ENCODE measurements at regions of chr5 and their contacts with region 1.

Region 1: GRCh38 chr5:112160652-112161391 is 258.3 kb downstream of the EPB41L4A start:
- DNase-seq: peak; percentile 86 to 94 (median 91)
- H3K4me3 ChIP-seq: peak overlapping the region; percentile 78 to 89
- H3K4me3 Mint-ChIP-seq: peak overlapping the region; percentile 92 to 97 (median 96)
- H3K27ac ChIP-seq: peak overlapping the region; percentile 71
- H3K27ac Mint-ChIP-seq: peak overlapping the region; percentile 69 to 93 (median 91)
- H3K4me1 ChIP-seq: peaks cover 23% of the 10 kb centered on the region
- H3K4me1 Mint-ChIP-seq: peaks cover 14 to 38% (median 26%) of the 10 kb centered on the region in 4 donors
- H3K27me3 ChIP-seq: no peaks in the 10 kb centered on the region
- H3K27me3 Mint-ChIP-seq: no peaks in the 10 kb centered on the region

Region 2: DNA sequence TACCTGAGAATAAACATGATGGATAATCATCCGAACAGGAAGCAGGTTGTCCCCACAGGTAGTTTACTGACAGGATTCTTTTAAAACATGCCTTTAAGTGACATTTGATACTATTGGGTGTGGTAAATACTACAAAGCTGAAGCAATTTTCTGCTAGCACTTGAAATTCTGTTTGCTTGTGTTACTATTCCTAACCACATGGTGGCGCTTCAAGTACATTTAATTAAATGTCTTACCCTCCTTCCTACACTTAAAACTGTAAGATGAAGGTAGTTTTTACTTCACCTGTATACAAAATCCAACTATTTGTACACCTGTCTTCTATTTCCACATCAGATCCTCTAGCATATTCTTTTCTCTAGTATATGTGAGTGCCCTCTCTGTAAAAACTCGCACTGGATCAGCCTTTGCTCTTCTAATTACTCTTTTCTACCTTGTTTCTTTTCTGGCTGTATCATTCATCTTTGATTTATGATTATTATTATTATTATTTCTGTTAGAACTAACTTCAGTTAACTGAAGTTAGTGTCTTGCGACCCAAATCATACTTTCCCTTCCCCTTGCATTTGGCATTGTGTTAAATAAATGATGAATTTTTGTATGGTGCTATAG is 1403.6 kb before region 1 on chr5:
- CTCF ChIA-PET with region 1: no interaction called
- POLR2A ChIA-PET with region 1: no interaction called
- intact Hi-C with region 1: loop called (anchors 5 kb)
- DNase-seq: peak in 4 of 5 donors; percentile 28 to 43 (median 30)
- H3K4me3 ChIP-seq: no peak overlapping the region
- H3K4me3 Mint-ChIP-seq: no peak overlapping the region
- H3K27ac ChIP-seq: no peak overlapping the region
- H3K27ac Mint-ChIP-seq: peak overlapping the region in 1 of 7 donors; percentile 40
- H3K4me1 ChIP-seq: peaks cover 26% of the 10 kb centered on the region
- H3K4me1 Mint-ChIP-seq: peaks cover 20 to 31% (median 22%) of the 10 kb centered on the region in 4 donors
- H3K27me3 ChIP-seq: no peaks in the 10 kb centered on the region
- H3K27me3 Mint-ChIP-seq: no peaks in the 10 kb centered on the region

Region 3: GRCh38 chr5:111092062-111092853 is 1068.6 kb before region 1 on chr5 and contains the start of gene WDR36:
- CTCF ChIA-PET with region 1: interaction called, 4 read pairs
- POLR2A ChIA-PET with region 1: interaction called, 5 read pairs
- intact Hi-C with region 1: loop called (anchors 1 kb)
- DNase-seq: peak; percentile 85 to 91 (median 87)
- H3K4me3 ChIP-seq: peak within 1 kb of the TSS; percentile 82 to 90
- H3K4me3 Mint-ChIP-seq: peak within 1 kb of the TSS; percentile 90 to 98 (median 97)
- H3K27ac ChIP-seq: peak within 1 kb of the TSS; percentile 73
- H3K27ac Mint-ChIP-seq: peak within 1 kb of the TSS; percentile 83 to 98 (median 96)
- H3K4me1 ChIP-seq: peaks cover 25% of the 10 kb centered on the region
- H3K4me1 Mint-ChIP-seq: peaks cover 15 to 34% (median 27%) of the 10 kb centered on the region in 4 donors
- H3K27me3 ChIP-seq: no peaks in the 10 kb centered on the region
- H3K27me3 Mint-ChIP-seq: peaks cover 1 to 7% of the 10 kb centered on the region in 2 donors
- total RNA-seq, gene WDR36: 26.3 to 27.6 TPM

Region 4: DNA sequence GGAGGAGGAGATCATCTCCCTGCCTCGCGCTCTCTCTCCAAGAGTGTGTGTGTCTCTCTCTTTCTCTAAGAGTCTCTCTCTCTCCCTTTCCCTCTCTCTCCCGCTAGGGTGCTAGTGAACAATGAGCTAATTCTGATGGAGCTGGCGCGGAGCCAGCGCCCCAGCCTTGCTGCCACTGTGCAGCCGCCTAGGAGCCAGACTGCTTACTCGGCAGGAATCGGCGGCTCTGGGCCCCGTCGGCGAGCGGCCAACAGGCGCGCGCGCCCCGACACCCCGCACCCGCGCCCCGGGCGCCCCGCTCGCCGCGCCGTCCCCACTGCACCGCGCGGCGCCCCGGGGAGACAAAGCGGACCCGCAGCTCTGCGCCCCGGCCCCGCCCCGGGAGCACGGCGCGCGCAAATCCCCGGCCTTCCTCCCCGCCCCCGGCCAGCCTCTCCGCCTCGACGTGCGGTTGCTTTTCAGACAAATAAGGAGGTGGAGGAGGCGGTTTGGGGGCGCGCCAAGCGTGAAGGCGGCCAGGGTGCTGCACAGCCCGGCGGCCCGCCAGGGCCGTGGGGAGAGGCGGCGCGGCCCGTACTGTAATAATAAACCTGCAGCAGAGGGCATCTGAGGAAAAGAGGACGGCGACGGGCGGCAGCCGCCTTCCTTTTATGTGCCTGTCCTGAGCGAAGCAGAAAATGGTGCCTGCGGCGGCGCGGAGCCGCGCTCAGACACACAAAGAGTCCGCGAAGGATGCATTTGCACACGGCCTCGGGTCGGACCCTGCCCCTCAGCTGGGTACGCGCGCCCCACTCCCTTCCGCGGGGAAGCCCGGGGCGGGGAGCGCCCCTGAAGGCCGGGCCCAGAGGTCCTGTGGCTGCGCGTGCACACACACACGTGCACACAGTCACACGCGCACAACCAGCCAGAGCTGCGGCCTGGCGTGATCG is 403.2 kb before region 1 on chr5:
- CTCF ChIA-PET with region 1: no interaction called
- POLR2A ChIA-PET with region 1: interaction called, 4 read pairs
- intact Hi-C with region 1: loop called (anchors 5 kb)
- DNase-seq: peak; percentile 68 to 77 (median 70)
- H3K4me3 ChIP-seq: peak overlapping the region in 1 of 2 donors; percentile 59
- H3K4me3 Mint-ChIP-seq: peak overlapping the region; percentile 82 to 93 (median 86)
- H3K27ac ChIP-seq: no peak overlapping the region
- H3K27ac Mint-ChIP-seq: peak overlapping the region in 4 of 7 donors; percentile 37 to 89 (median 64)
- H3K4me1 ChIP-seq: no peaks in the 10 kb centered on the region
- H3K4me1 Mint-ChIP-seq: peaks cover 6 to 12% (median 8%) of the 10 kb centered on the region in 4 donors
- H3K27me3 ChIP-seq: no peaks in the 10 kb centered on the region
- H3K27me3 Mint-ChIP-seq: peaks cover 6 to 9% of the 10 kb centered on the region in 2 donors

Region 5: DNA sequence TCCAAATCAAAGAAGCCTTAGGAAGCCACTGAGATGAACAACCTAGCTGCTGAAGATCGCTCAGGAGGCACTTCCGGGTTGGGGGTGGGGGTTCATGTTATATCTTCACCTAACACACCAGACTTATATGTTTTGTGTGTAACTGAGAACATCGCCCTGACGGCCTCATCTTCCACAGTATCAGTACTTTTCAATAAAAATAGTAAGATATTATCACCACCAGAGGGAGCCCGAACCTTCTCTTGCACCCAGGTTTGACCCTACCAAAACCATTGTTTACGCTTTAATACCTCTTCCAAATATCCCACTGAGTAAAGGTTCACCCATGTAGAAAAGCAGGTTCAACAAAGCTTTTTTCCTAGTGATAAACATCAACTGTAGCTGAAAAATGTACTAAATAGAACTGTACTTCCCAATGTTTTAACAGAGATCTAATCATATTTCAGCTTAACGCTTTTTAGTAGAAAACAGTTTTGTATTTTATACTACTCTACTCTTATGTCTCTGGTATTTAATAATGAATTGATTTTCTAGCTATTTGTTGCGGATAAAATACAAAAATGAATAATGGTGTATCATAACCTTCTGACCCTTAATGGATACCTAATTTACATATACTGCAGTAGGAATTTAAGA is 14.3 kb after region 1 on chr5:
- CTCF ChIA-PET with region 1: interaction called, 36 read pairs
- POLR2A ChIA-PET with region 1: interaction called, 5 read pairs
- intact Hi-C with region 1: no loop called
- DNase-seq: peak in 4 of 5 donors; percentile 27 to 41 (median 40)
- H3K4me3 ChIP-seq: no peak overlapping the region
- H3K4me3 Mint-ChIP-seq: peak overlapping the region in 2 of 8 donors; percentile 6 to 48
- H3K27ac ChIP-seq: no peak overlapping the region
- H3K27ac Mint-ChIP-seq: no peak overlapping the region
- H3K4me1 ChIP-seq: peaks cover 4% of the 10 kb centered on the region
- H3K4me1 Mint-ChIP-seq: peaks cover 0 to 5% (median 2%) of the 10 kb centered on the region in 4 donors
- H3K27me3 ChIP-seq: no peaks in the 10 kb centered on the region
- H3K27me3 Mint-ChIP-seq: peaks cover 8 to 12% of the 10 kb centered on the region in 2 donors

Region 6: GRCh38 chr5:112276983-112277382 is 116.2 kb after region 1 on chr5:
- CTCF ChIA-PET with region 1: no interaction called
- POLR2A ChIA-PET with region 1: no interaction called
- intact Hi-C with region 1: no loop called
- DNase-seq: no peak
- H3K4me3 ChIP-seq: no peak overlapping the region
- H3K4me3 Mint-ChIP-seq: no peak overlapping the region
- H3K27ac ChIP-seq: no peak overlapping the region
- H3K27ac Mint-ChIP-seq: no peak overlapping the region
- H3K4me1 ChIP-seq: no peaks in the 10 kb centered on the region
- H3K4me1 Mint-ChIP-seq: no peaks in the 10 kb centered on the region
- H3K27me3 ChIP-seq: no peaks in the 10 kb centered on the region
- H3K27me3 Mint-ChIP-seq: peaks cover 2 to 3% of the 10 kb centered on the region in 2 donors

Region 7: DNA sequence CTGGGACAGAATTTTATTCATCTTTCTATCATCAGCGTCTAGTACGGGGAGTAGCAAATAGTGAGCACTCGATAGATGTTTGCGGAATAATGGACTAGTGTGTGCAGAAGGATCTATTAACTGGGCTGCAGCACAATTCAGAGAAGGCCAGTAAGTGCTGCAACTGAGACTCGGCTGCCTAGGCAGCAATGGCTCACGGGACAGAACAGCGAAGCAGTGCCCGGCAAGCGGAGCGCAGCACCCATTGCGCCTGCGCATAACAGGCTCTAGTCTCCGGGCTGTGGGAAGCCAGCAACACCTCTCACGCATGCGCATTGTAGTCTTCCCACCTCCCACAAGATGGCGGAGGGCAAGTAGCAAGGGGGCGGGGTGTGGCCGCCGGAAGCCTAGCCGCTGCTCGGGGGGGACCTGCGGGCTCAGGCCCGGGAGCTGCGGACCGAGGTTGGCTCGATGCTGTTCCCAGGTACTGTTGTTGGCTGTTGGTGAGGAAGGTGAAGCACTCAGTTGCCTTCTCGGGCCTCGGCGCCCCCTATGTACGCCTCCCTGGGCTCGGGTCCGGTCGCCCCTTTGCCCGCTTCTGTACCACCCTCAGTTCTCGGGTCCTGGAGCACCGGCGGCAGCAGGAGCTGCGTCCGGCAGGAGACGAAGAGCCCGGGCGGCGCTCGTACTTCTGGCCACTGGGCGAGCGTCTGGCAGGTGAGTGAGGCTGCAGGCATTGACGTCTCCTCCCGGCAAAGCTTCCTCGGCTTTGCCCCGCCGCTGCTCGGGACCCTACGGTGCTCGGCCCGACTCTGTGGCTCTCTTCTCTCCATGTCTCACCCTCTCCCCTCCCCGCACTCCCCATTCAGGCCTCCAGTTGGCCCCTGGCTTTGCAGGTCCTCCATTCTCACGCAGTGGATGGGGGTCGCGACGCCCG is 546.6 kb after region 1 on chr5:
- CTCF ChIA-PET with region 1: interaction called, 4 read pairs
- POLR2A ChIA-PET with region 1: no interaction called
- intact Hi-C with region 1: loop called (anchors 2 kb)
- DNase-seq: peak; percentile 95 to 99 (median 98)
- H3K4me3 ChIP-seq: peak overlapping the region; percentile 80 to 86
- H3K4me3 Mint-ChIP-seq: peak overlapping the region; percentile 91 to 96 (median 95)
- H3K27ac ChIP-seq: peak overlapping the region; percentile 86
- H3K27ac Mint-ChIP-seq: peak overlapping the region; percentile 89 to 97 (median 93)
- H3K4me1 ChIP-seq: peaks cover 52% of the 10 kb centered on the region
- H3K4me1 Mint-ChIP-seq: peaks cover 41 to 61% (median 48%) of the 10 kb centered on the region in 4 donors
- H3K27me3 ChIP-seq: no peaks in the 10 kb centered on the region
- H3K27me3 Mint-ChIP-seq: no peaks in the 10 kb centered on the region

Region 8: GRCh38 chr5:112757468-112758208 is 596.8 kb after region 1 on chr5:
- CTCF ChIA-PET with region 1: interaction called, 5 read pairs
- POLR2A ChIA-PET with region 1: no interaction called
- intact Hi-C with region 1: loop called (anchors 5 kb)
- DNase-seq: peak in 4 of 5 donors; percentile 50 to 64 (median 52)
- H3K4me3 ChIP-seq: no peak overlapping the region
- H3K4me3 Mint-ChIP-seq: peak overlapping the region in 1 of 8 donors; percentile 20
- H3K27ac ChIP-seq: no peak overlapping the region
- H3K27ac Mint-ChIP-seq: peak overlapping the region in 5 of 7 donors; percentile 3 to 71 (median 59)
- H3K4me1 ChIP-seq: no peaks in the 10 kb centered on the region
- H3K4me1 Mint-ChIP-seq: peaks cover 9 to 12% (median 9%) of the 10 kb centered on the region in 4 donors
- H3K27me3 ChIP-seq: no peaks in the 10 kb centered on the region
- H3K27me3 Mint-ChIP-seq: no peaks in the 10 kb centered on the region

Measured in CD4-positive, alpha-beta memory T cell (primary cell).